Mammary epithelial cell (primary cell): ENCODE measurements at regions of chr1 and their contacts with region 1.

Region 1: GRCh38 chr1:23539698-23540266 is 8.7 kb upstream of the E2F2 start:
- DNase-seq: peak; percentile 87
- H3K4me3 ChIP-seq: no peak overlapping the region
- H3K27ac ChIP-seq: no peak overlapping the region
- H3K4me1 ChIP-seq: peaks cover 8% of the 10 kb centered on the region
- H3K27me3 ChIP-seq: no peaks in the 10 kb centered on the region
- CTCF ChIP-seq: peak; percentile 95 to 98

Region 2: GRCh38 chr1:23216771-23217420 is 322.9 kb before region 1 on chr1:
- CTCF ChIA-PET with region 1: no interaction called
- dilution Hi-C with region 1: no loop called
- in situ Hi-C with region 1: no loop called
- intact Hi-C with region 1: loop called (anchors 5 kb)
- DNase-seq: no peak
- H3K4me3 ChIP-seq: peak overlapping the region; percentile 39 to 50 (median 47)
- H3K27ac ChIP-seq: no peak overlapping the region
- H3K4me1 ChIP-seq: no peaks in the 10 kb centered on the region
- H3K27me3 ChIP-seq: no peaks in the 10 kb centered on the region
- CTCF ChIP-seq: peak; percentile 21 to 54

Region 3: GRCh38 chr1:23367791-23368561 is 171.8 kb before region 1 on chr1:
- CTCF ChIA-PET with region 1: no interaction called
- dilution Hi-C with region 1: no loop called
- in situ Hi-C with region 1: no loop called
- intact Hi-C with region 1: loop called (anchors 1 kb)
- DNase-seq: peak; percentile 98
- H3K4me3 ChIP-seq: peak overlapping the region; percentile 55 to 83 (median 79)
- H3K27ac ChIP-seq: peak overlapping the region; percentile 86
- H3K4me1 ChIP-seq: peaks cover 44% of the 10 kb centered on the region
- H3K27me3 ChIP-seq: no peaks in the 10 kb centered on the region
- CTCF ChIP-seq: no peak

Region 4: GRCh38 chr1:23496490-23497181 is 43.1 kb before region 1 on chr1:
- CTCF ChIA-PET with region 1: interaction called, 20 read pairs
- dilution Hi-C with region 1: no loop called
- in situ Hi-C with region 1: loop called (anchors 5 kb)
- intact Hi-C with region 1: loop called (anchors 1 kb)
- DNase-seq: no peak
- H3K4me3 ChIP-seq: no peak overlapping the region
- H3K27ac ChIP-seq: no peak overlapping the region
- H3K4me1 ChIP-seq: no peaks in the 10 kb centered on the region
- H3K27me3 ChIP-seq: no peaks in the 10 kb centered on the region
- CTCF ChIP-seq: no peak

Region 5: GRCh38 chr1:23664837-23665795 is 125.3 kb after region 1 on chr1:
- CTCF ChIA-PET with region 1: no interaction called
- dilution Hi-C with region 1: no loop called
- in situ Hi-C with region 1: no loop called
- intact Hi-C with region 1: loop called (anchors 1 kb)
- DNase-seq: peak; percentile 29
- H3K4me3 ChIP-seq: no peak overlapping the region
- H3K27ac ChIP-seq: no peak overlapping the region
- H3K4me1 ChIP-seq: peaks cover 18% of the 10 kb centered on the region
- H3K27me3 ChIP-seq: no peaks in the 10 kb centered on the region
- CTCF ChIP-seq: peak; percentile 26 to 52